SK-N-SH (cell line): ENCODE measurements at regions of chr7 and their contacts with region 1.

Region 1: DNA sequence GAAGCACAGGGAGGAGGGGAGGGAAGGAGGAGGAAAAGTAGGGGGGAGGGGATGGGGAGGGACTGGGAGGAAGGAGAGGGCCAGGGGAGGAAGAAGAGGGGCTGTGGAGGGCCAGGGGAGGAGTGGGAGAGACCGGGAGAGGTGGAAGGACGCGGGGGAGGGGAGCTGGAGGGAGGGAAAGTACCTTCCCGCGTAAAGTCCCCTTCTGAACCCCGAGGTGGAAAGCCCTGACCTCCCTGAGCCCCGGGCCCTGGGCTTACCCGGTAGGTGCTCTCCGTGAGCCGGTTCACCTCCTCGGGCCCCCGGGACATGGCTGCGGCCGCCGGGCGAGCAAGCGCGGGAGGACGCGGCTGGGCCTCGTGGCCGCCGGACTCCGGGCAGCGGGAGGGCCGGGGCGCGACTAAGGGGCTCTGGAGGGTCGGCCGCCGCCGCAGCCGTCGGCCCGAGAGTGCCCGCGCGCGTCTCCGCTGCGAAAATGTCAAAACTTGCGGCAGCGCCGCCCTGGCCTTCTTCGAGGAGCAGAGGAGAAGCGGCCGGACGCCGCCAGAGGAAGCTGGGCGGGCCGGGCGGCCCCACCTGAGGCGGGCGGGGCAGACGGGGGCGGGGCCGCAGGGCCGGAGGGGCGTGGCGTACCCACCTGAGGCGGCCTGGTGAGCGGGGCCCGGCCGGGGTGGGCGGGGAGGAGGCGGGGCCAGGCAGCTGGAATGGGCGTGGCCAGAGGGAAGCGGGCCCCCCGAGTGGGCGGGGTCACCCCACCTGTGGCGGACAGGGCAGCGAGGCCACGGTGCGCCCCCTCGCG is at the start of gene BAIAP2L1:
- DNase-seq: peak; percentile 100
- H3K4me3 ChIP-seq: peak within 1 kb of the TSS; percentile 58 to 63
- H3K27ac ChIP-seq: no peak within 1 kb of the TSS
- H3K4me1 ChIP-seq: peaks cover 4 to 8% of the 10 kb centered on the region in 2 experiments; a peak in 2 of 4 replicates
- H3K27me3 ChIP-seq: no peaks in the 10 kb centered on the region
- CTCF ChIP-seq: no peak
- EP300 ChIP-seq: no peak
- RAD21 ChIP-seq: peak; percentile 74
- polyA plus RNA-seq, gene BAIAP2L1: 8.7 and 8.8 TPM in 2 replicates

Region 2: DNA sequence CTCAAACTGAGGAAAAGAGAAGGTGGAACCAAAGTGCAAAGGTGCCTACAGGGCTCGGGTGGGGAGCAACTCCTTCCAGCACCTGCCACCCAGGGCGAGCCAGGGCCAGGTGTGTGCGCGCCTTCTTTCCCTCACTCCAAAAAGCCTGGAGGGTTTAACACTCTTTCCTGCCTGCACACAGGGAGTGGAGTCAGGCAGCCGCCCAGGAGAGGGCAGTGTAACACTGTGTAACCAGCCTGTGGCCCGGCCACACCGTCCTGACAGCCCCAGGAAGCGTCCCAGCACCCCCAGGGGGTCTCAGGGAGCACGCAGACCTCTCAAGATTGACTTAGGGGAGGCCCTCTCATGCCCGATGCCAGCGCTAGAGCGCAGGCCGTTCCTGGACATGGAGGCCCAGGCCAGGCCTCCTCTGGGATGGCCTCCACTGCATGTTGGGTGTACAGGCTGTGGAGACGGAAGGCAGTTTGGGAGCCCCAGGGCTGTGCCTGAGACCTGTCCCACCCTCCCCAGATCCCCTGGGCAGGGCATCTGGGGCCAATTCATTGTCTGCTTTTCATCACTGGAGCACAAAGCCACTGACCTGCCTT is 105.9 kb before region 1 on chr7:
- CTCF ChIA-PET with region 1: interaction called, 108 read pairs
- POLR2A ChIA-PET with region 1: no interaction called
- DNase-seq: peak; percentile 93
- H3K4me3 ChIP-seq: no peak overlapping the region; a peak in 1 of 4 replicates
- H3K27ac ChIP-seq: no peak overlapping the region
- H3K4me1 ChIP-seq: peaks cover 0 to 6% of the 10 kb centered on the region in 2 experiments; a peak in 1 of 4 replicates
- H3K27me3 ChIP-seq: no peaks in the 10 kb centered on the region
- CTCF ChIP-seq: peak; percentile 87
- EP300 ChIP-seq: no peak
- RAD21 ChIP-seq: peak; percentile 90

Region 3: GRCh38 chr7:98323597-98324322 is 77.0 kb before region 1 on chr7:
- CTCF ChIA-PET with region 1: interaction called, 13 read pairs
- POLR2A ChIA-PET with region 1: no interaction called
- DNase-seq: no peak
- H3K4me3 ChIP-seq: no peak overlapping the region
- H3K27ac ChIP-seq: no peak overlapping the region
- H3K4me1 ChIP-seq: no peaks in the 10 kb centered on the region; a peak in 1 of 4 replicates
- H3K27me3 ChIP-seq: no peaks in the 10 kb centered on the region
- CTCF ChIP-seq: no peak
- EP300 ChIP-seq: no peak
- RAD21 ChIP-seq: no peak

Region 4: GRCh38 chr7:98378210-98378819 is 22.4 kb before region 1 on chr7:
- CTCF ChIA-PET with region 1: interaction called, 17 read pairs
- POLR2A ChIA-PET with region 1: no interaction called
- DNase-seq: no peak
- H3K4me3 ChIP-seq: no peak overlapping the region
- H3K27ac ChIP-seq: no peak overlapping the region
- H3K4me1 ChIP-seq: no peaks in the 10 kb centered on the region
- H3K27me3 ChIP-seq: no peaks in the 10 kb centered on the region
- CTCF ChIP-seq: no peak
- EP300 ChIP-seq: no peak
- RAD21 ChIP-seq: no peak